Head of caudate nucleus (tissue), 42 donors: ENCODE measurements at regions of chr7 and their contacts with region 1.

Region 1: DNA sequence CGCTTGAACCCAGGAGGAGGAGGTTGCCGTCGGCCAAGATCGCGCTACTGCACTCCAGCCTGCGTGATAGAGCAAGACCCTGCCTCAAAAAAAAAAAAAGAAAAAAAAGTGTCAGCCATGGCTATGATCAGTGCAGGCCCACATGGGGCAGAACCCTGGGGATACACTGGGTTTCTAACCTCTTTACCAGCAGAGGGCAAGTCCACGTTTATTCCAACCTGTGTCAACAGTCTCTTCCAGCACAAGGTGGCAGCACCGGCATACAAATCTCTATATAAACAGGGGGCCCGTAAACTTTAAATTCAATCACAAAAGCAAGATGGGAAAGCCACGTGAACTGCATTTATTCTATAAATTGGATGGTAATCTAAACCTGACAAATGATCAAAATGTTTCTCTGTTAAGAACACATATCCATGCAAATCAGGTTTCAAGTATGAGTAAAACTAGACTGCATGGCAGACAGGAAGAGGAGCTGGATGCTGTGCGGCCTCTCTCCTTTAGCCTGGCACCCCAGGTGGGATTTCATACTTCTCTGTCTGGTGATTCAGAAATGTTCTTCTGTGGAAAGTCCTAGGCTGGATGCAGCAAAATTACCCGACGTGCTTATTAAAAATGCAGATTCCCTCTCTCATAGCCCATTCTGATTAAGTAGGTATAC is 60.0 kb upstream of the STEAP1B start:
- DNase-seq: peak; percentile 35 to 86 (median 72)

Region 2: DNA sequence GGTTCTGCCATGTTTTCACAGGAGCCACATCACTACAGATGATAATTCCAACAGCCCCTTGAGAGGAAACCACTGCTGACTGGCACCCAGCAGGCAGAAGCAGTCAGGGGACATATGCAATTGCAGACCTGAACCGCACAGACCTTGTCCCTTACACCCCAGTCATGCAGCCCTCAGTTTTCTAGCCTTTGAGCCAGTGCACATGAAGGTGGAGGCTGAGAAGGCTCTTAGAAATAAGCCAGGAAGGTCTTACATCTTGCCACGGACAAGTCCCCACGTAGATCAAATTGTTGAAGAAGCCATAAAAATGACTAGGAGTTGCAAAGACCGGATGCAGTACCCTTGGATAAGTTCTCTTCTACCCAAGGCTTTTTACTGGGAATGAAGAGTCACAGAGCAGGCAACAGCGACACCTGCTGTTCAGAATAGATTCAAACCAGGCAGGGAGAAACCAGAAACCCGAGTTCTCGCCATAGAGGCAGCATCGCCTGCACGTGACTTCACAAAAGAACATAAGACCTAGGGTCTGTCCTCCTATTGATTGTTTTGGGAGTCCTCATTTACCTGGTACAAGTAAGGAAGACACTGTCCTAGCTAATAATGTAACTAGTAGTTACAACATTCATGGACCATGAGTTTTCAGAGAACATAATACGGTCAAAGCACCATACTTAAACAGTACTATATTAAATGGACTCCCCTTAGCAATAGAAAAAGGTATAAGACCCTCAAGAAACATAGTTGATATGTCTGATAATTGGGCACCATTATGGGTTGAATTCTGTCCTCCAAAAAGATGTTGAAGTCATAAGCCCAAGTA is 71.1 kb before region 1 on chr7:
- intact Hi-C with region 1: no loop called
- DNase-seq: peak; percentile 49 to 94 (median 84)

Region 3: GRCh38 chr7:22694597-22695207 is 134.7 kb after region 1 on chr7:
- intact Hi-C with region 1: no loop called
- DNase-seq: no peak

Region 4: DNA sequence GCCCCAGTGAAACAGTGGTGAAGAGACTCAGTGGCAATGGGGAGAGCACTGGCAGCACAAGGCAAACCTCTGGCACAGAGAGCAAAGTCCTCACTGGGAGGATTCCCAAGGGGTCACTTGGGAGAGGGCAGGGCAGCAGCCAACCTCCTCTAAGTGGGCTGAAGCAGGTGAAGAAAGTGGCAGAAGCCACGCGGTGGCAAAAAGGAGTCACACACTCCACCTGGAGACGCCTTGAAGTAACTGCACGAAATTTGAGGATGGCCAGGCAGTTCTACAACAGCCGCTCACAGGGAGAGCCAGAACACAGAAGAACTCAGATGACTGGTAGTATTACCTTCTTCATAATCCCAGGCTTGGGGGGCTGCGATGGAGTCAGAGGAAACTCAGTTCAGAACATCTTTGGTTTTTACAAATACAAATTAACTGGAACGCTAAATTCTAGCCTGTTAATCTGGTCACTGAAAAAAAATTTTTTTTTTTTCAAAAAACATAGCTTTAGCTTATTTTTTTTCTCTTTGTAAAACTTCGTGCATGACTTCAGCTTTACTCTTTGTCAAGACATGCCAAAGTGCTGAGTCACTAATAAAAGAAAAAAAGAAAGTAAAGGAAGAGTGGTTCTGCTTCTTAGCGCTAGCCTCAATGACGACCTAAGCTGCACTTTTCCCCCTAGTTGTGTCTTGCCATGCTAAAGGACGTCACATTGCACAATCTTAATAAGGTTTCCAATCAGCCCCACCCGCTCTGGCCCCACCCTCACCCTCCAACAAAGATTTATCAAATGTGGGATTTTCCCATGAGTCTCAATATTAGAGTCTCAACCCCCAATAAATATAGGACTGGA is 166.6 kb after region 1 on chr7:
- intact Hi-C with region 1: loop called (anchors 5 kb)
- DNase-seq: peak in 38 of 42 donors; percentile 7 to 80 (median 46)

Region 5: GRCh38 chr7:23055582-23056178 is 495.7 kb after region 1 on chr7:
- intact Hi-C with region 1: loop called (anchors 10 kb)
- DNase-seq: peak in 35 of 42 donors; percentile 11 to 88 (median 66)